Mammary epithelial cell (primary cell): ENCODE measurements at regions of chr6 and their contacts with region 1.

Region 1: DNA sequence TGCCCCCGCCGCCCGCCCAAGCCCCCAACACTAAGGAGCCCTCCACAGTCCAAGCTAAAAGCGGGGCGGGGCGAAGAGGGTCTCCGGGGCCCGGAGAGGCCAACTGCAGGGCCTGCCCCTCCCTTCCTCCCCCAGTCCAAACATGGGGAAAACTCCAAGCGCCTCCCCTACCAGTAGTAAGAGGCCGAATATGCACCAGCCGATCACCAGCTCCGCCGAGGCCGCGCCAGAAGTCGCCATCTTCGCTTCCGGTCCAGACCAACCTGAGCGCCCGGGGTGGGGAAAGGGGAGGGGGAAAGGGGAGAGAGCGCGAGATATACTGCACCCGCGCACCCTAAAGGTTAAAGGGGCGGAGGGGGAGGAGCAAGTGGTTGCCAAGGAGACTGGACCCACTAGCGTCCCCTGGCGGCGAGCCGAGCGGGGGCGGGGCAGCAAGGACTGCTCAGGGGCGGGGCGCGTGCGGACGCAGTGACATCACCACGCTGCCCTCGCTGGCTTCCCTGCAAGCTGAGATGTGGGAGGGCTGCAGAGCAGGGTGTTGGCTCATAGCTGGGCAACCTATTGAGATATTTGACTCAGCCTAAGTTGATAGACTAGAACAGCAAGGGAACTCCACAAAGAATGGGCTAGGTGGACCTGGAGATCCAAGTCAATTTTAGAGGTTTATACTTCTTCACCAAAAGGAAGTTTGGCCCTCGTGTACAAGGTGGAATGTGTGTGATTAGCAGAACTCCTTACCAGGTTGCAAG is at the start of gene LMBRD1:
- DNase-seq: peak; percentile 92
- H3K4me3 ChIP-seq: peak within 1 kb of the TSS; percentile 72 to 80 (median 80)
- H3K27ac ChIP-seq: peak within 1 kb of the TSS; percentile 93
- H3K4me1 ChIP-seq: peaks cover 14% of the 10 kb centered on the region
- H3K27me3 ChIP-seq: no peaks in the 10 kb centered on the region
- CTCF ChIP-seq: peak; percentile 62 to 89
- total RNA-seq, gene LMBRD1: 17.7 to 30.0 TPM

Region 2: GRCh38 chr6:69044534-69044933 is 752.3 kb before region 1 on chr6:
- CTCF ChIA-PET with region 1: interaction called, 20 read pairs
- dilution Hi-C with region 1: no loop called
- in situ Hi-C with region 1: no loop called
- intact Hi-C with region 1: no loop called
- DNase-seq: no peak
- H3K4me3 ChIP-seq: no peak overlapping the region
- H3K27ac ChIP-seq: no peak overlapping the region
- H3K4me1 ChIP-seq: no peaks in the 10 kb centered on the region
- H3K27me3 ChIP-seq: no peaks in the 10 kb centered on the region
- CTCF ChIP-seq: no peak

Region 3: GRCh38 chr6:69784595-69785377 is 12.0 kb before region 1 on chr6:
- CTCF ChIA-PET with region 1: no interaction called
- dilution Hi-C with region 1: no loop called
- in situ Hi-C with region 1: no loop called
- intact Hi-C with region 1: no loop called
- DNase-seq: no peak
- H3K4me3 ChIP-seq: no peak overlapping the region
- H3K27ac ChIP-seq: no peak overlapping the region
- H3K4me1 ChIP-seq: peaks cover 5% of the 10 kb centered on the region
- H3K27me3 ChIP-seq: no peaks in the 10 kb centered on the region
- CTCF ChIP-seq: no peak

Region 4: GRCh38 chr6:71367756-71368155 is 1570.9 kb after region 1 on chr6:
- CTCF ChIA-PET with region 1: interaction called, 10 read pairs
- dilution Hi-C with region 1: no loop called
- in situ Hi-C with region 1: no loop called
- intact Hi-C with region 1: no loop called
- DNase-seq: peak; percentile 67
- H3K4me3 ChIP-seq: no peak overlapping the region
- H3K27ac ChIP-seq: peak overlapping the region; percentile 41
- H3K4me1 ChIP-seq: peaks cover 20% of the 10 kb centered on the region
- H3K27me3 ChIP-seq: no peaks in the 10 kb centered on the region
- CTCF ChIP-seq: no peak